Common myeloid progenitor, CD34-positive (primary cell): ENCODE measurements at regions of chr1 and their contacts with region 1.

Region 1: GRCh38 chr1:156383023-156383422 is 14.0 kb downstream of the RHBG start:
- DNase-seq: peak; percentile 62 to 76 (median 69)
- H3K4me3 ChIP-seq: no peak overlapping the region
- H3K27ac ChIP-seq: no peak overlapping the region
- H3K4me1 ChIP-seq: peaks cover 3 to 21% (median 17%) of the 10 kb centered on the region in 4 experiments
- H3K27me3 ChIP-seq: peaks cover 0 to 20% (median 10%) of the 10 kb centered on the region in 5 experiments

Region 2: DNA sequence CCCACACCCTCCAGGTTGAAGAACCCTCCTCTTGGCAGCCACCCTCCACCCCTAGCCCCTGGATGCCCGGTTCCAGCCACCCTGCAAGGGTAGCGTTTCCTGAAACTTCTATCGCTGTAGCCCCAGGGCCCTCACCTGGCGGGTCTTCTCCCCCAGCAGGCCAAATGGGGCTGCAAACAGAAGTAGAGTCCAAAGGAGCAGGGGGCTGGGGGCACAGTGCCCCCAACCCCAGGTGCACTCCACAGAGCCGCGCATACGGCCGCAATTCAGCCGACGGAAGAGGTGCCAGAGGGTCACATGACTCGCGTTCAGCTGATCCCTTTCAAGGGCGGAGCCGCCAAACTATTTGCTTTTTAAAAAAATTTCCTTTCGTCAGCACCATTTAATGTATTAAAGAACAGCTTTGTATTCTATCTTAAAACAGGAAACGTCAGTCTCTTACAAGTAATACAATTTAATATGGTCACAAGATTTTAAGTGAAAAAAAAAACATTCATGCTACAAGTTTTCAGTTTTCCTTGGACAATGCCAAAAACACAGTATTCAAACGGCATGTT is 87.6 kb before region 1 on chr1 and contains the start of gene GLMP:
- CTCF ChIA-PET with region 1: no interaction called
- POLR2A ChIA-PET with region 1: no interaction called
- DNase-seq: peak; percentile 39 to 73 (median 62)
- H3K4me3 ChIP-seq: peak within 1 kb of the TSS; percentile 51 to 89 (median 75)
- H3K27ac ChIP-seq: peak within 1 kb of the TSS in 1 of 2 experiments; percentile 69
- H3K4me1 ChIP-seq: peaks cover 9 to 26% (median 18%) of the 10 kb centered on the region in 4 experiments
- H3K27me3 ChIP-seq: no peaks in the 10 kb centered on the region

Region 3: GRCh38 chr1:156356875-156357534 is 26.0 kb before region 1 on chr1:
- CTCF ChIA-PET with region 1: interaction called, 18 read pairs
- POLR2A ChIA-PET with region 1: no interaction called
- DNase-seq: peak; percentile 68 to 73 (median 70)
- H3K4me3 ChIP-seq: peak overlapping the region in 2 of 7 experiments; percentile 11 to 45
- H3K27ac ChIP-seq: no peak overlapping the region
- H3K4me1 ChIP-seq: peaks cover 0 to 7% (median 5%) of the 10 kb centered on the region in 4 experiments
- H3K27me3 ChIP-seq: peaks cover 0 to 11% (median 4%) of the 10 kb centered on the region in 5 experiments

Region 4: GRCh38 chr1:156394835-156395461 is 11.9 kb after region 1 on chr1:
- CTCF ChIA-PET with region 1: interaction called, 32 read pairs
- POLR2A ChIA-PET with region 1: no interaction called
- DNase-seq: peak; percentile 22 to 57 (median 55)
- H3K4me3 ChIP-seq: no peak overlapping the region
- H3K27ac ChIP-seq: no peak overlapping the region
- H3K4me1 ChIP-seq: peaks cover 0 to 6% (median 0%) of the 10 kb centered on the region in 4 experiments
- H3K27me3 ChIP-seq: peaks cover 0 to 21% (median 0%) of the 10 kb centered on the region in 5 experiments

Region 5: GRCh38 chr1:156421062-156421938 is 38.3 kb after region 1 on chr1:
- CTCF ChIA-PET with region 1: interaction called, 70 read pairs
- POLR2A ChIA-PET with region 1: no interaction called
- DNase-seq: peak; percentile 57 to 78 (median 76)
- H3K4me3 ChIP-seq: peak overlapping the region in 4 of 7 experiments; percentile 17 to 46 (median 30)
- H3K27ac ChIP-seq: no peak overlapping the region
- H3K4me1 ChIP-seq: peaks cover 0 to 23% (median 18%) of the 10 kb centered on the region in 4 experiments
- H3K27me3 ChIP-seq: peaks cover 34 to 98% (median 55%) of the 10 kb centered on the region in 5 experiments

Region 6: GRCh38 chr1:156456622-156457465 is 73.8 kb after region 1 on chr1:
- CTCF ChIA-PET with region 1: interaction called, 17 read pairs
- POLR2A ChIA-PET with region 1: no interaction called
- DNase-seq: peak; percentile 98 to 99 (median 98)
- H3K4me3 ChIP-seq: peak overlapping the region; percentile 36 to 81 (median 74)
- H3K27ac ChIP-seq: peak overlapping the region; percentile 64 to 89
- H3K4me1 ChIP-seq: peaks cover 5 to 26% (median 17%) of the 10 kb centered on the region in 4 experiments
- H3K27me3 ChIP-seq: peaks cover 0 to 1% (median 0%) of the 10 kb centered on the region in 5 experiments